ENCODE measurements at regions of chr7 and their contacts with region 1.

Region 1: GRCh38 chr7:41881331-41882130 is 178.6 kb upstream of the INHBA start:
- DNase-seq: peak; percentile 92
- H3K4me3 Mint-ChIP-seq: peak overlapping the region; percentile 19
- H3K27ac Mint-ChIP-seq: peak overlapping the region; percentile 98
- H3K4me1 Mint-ChIP-seq: peaks cover 53% of the 10 kb centered on the region
- H3K27me3 Mint-ChIP-seq: no peaks in the 10 kb centered on the region

Region 2: GRCh38 chr7:41630741-41631140 is 250.8 kb before region 1 on chr7:
- CTCF ChIA-PET with region 1: no interaction called
- intact Hi-C with region 1: loop called (anchors 1 kb)
- DNase-seq: peak; percentile 41
- H3K4me3 Mint-ChIP-seq: no peak overlapping the region
- H3K27ac Mint-ChIP-seq: no peak overlapping the region
- H3K4me1 Mint-ChIP-seq: peaks cover 25% of the 10 kb centered on the region
- H3K27me3 Mint-ChIP-seq: peaks cover 7% of the 10 kb centered on the region

Region 3: DNA sequence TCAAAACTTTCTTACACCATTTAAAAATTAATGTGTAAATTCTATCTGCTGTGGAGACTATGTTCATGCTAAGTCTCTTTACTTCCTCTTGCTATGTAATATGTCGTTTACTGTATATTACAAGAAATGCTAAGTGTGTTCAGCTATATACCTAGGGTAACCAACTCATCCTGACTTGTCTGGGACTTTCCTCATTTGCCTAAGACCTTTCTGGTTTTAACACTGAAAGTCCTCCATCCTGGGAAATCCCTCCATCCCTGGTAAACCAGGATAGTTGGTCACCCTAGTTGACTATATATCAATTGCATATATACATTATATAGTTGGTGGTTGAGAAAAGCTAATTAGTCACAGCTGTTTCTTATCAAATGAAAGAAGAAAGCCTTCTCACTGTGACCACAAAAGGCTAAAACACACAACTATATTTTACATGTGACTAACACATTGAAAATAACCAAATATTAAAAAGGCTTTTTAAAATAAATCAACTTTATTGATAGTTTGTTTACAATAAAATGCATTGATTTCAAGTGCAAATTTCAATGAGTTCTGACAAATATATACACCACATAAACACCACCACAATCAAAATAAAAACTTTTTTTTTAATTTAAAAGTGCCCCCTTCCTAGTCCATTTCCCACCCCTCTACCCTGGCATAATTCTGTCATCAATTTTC is 10.9 kb before region 1 on chr7:
- CTCF ChIA-PET with region 1: interaction called, 4 read pairs
- intact Hi-C with region 1: loop called (anchors 1 kb)
- DNase-seq: peak; percentile 29
- H3K4me3 Mint-ChIP-seq: no peak overlapping the region
- H3K27ac Mint-ChIP-seq: peak overlapping the region; percentile 13
- H3K4me1 Mint-ChIP-seq: peaks cover 22% of the 10 kb centered on the region
- H3K27me3 Mint-ChIP-seq: peaks cover 30% of the 10 kb centered on the region

Region 4: DNA sequence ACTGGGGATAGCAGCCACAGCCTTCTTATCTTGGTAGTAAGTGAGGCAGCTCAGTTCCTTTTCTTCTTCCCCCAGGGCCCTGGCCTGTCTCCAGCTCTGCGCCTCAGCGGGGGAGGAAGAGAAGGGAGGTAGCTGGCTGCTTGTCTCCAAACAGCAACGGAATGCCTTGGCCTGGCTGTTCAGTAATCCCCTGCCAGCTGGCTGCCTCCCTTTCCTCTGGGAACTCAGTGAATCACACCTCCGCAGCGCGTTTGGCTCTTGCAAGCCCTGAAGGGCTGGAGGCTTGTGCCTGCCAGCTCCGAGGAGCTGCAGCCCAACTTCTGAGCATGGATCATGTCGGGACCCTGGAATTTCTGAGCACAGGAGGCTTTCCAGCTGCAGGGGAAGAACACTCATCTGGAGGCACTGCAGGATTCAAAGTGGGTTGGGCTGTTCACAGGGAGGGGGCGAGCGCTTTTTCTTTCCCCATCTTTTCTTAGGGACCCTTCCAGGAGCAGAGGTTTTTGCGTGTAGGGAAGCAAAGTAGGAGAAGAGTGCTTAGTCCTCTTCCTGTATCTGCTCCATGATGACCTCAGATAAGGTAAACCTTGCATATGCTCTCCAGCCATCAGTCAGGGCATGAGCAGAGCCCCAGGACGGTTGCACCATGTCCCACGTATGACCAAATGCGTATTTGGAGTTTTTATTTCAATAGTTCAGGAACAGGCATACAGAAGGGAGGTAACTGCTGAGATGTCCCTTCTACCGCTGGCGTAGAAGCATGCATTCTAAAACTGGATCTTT is 74.6 kb after region 1 on chr7:
- CTCF ChIA-PET with region 1: no interaction called
- intact Hi-C with region 1: no loop called
- DNase-seq: no peak
- H3K4me3 Mint-ChIP-seq: no peak overlapping the region
- H3K27ac Mint-ChIP-seq: no peak overlapping the region
- H3K4me1 Mint-ChIP-seq: no peaks in the 10 kb centered on the region
- H3K27me3 Mint-ChIP-seq: peaks cover 38% of the 10 kb centered on the region

Region 5: DNA sequence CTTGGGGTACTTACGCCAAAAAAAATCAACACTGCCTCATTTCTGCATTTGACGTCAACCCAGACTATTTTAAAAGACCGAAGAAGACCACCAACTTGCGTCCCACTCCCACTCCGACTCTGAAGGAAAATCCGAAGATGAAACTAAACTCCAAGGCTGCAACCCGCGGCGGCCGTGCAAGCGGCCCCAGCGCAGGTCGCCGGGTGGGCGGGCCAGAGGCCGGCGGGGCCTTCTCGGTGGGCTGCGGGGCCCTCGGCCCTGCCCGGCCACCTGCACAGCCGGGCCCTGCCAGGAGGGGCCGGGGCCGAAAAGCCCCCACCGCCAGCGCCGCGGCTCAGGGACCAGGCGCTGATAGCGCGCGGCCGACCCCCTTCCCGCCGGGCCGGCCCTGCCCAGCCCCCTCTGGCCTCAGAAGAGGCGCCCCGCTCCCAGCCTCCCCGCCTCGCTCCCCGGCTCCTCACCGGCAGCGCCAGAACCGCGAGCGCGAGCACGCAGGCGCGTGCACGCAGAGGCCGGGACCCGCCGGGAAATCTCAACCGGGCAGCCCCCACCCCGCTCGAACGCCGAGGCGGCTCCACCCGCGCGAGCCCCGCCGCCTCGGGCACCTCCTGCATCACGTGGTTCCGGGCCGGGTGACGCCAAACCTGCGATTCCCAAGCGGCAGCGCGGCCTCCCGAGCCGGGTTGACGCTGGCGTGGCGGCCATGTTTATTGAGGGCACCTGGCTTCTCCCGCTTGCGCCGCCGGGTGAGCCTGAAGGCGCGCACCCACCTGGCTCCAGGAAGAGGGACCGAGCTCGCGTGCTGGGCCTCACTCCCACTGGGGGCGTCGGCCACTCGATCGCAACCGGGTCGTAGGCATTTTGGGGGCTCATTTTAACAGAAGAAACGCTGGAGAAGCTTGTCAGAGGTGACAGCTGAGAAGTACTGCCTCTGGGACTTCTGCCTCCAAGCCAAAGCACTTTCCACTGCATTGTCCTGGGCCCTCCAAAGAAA is 1030.2 kb after region 1 on chr7 and contains the start of gene C7orf25:
- CTCF ChIA-PET with region 1: no interaction called
- intact Hi-C with region 1: loop called (anchors 5 kb)
- DNase-seq: peak; percentile 97
- H3K4me3 Mint-ChIP-seq: peak within 1 kb of the TSS; percentile 88
- H3K27ac Mint-ChIP-seq: peak within 1 kb of the TSS; percentile 90
- H3K4me1 Mint-ChIP-seq: peaks cover 60% of the 10 kb centered on the region
- H3K27me3 Mint-ChIP-seq: no peaks in the 10 kb centered on the region
- total RNA-seq, gene C7orf25: 0.93 to 2.0 TPM

Region 6: GRCh38 chr7:43302211-43302711 is 1420.7 kb after region 1 on chr7:
- CTCF ChIA-PET with region 1: no interaction called
- intact Hi-C with region 1: loop called (anchors 2 kb)
- DNase-seq: peak; percentile 73
- H3K4me3 Mint-ChIP-seq: no peak overlapping the region
- H3K27ac Mint-ChIP-seq: no peak overlapping the region
- H3K4me1 Mint-ChIP-seq: peaks cover 36% of the 10 kb centered on the region
- H3K27me3 Mint-ChIP-seq: no peaks in the 10 kb centered on the region

Region 7: GRCh38 chr7:43735802-43736541 is 1854.4 kb after region 1 on chr7:
- CTCF ChIA-PET with region 1: no interaction called
- intact Hi-C with region 1: loop called (anchors 10 kb)
- DNase-seq: peak; percentile 86
- H3K4me3 Mint-ChIP-seq: no peak overlapping the region
- H3K27ac Mint-ChIP-seq: peak overlapping the region; percentile 75
- H3K4me1 Mint-ChIP-seq: peaks cover 22% of the 10 kb centered on the region
- H3K27me3 Mint-ChIP-seq: peaks cover 7% of the 10 kb centered on the region

Measured in activated naive CD4-positive, alpha-beta T cell treated with anti-CD3 and anti-CD28 coated beads for 36 hours (primary cell).